MCF 10A (cell line): ENCODE measurements at regions of chr4 and their contacts with region 1.

Region 1: DNA sequence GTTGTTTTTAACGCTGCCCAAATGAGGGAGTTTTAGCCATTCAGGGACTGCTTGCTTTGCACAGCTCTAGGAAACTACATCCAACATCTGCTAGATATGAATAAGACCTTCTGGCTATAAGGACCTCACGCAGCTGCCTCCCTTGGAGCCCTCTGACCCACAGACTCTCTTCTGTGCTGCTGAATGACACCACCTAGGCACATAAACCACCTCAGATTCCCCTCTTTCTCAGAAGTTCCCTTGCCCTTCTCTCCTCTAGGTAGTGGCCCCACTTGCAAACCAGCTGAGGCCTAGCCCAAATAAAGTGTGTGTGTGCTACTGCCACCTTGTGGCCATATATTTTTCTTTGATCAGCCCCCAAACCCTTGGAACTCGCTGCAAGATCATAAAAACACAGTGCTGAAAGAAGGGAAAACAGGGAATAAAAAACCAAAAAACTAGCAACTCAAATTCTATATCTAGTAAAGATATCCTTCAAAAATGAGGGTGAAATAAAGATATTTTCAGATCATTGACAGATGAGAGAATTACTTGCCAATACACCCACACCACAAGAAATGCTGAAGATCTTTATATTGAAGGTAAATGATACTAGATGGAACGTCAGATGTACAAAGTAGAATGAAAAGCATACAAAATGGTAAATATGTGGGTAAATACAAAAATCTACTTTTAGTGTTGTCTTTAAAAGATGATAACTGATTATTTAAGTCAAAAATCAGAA is 265.9 kb downstream of the ADAMTS3 start:
- DNase-seq: peak; percentile 66
- H3K4me3 Mint-ChIP-seq: no peak overlapping the region
- H3K27ac Mint-ChIP-seq: no peak overlapping the region
- H3K4me1 Mint-ChIP-seq: no peaks in the 10 kb centered on the region
- H3K27me3 Mint-ChIP-seq: no peaks in the 10 kb centered on the region
- CTCF ChIP-seq: peak; percentile 58

Region 2: DNA sequence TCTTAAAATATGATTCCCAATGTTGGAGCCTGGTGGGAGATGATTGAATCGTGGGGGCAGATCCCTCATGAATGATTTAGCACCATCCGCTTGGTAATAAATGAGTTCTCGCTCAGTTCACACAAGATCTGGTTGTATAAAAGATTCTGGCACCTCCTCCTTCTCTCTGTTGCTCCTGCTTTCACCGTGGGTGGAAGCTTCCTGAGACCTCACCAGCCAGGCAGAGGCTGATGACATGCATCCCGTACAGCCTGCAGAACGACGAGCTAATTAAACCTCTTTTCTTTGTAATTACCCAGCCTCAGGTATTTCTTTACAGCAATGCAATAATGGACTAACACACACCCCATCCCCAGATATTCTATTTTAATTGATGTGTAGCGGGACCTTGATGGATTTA is 109.1 kb before region 1 on chr4:
- CTCF ChIA-PET with region 1: no interaction called
- POLR2A ChIA-PET with region 1: no interaction called
- intact Hi-C with region 1: no loop called
- DNase-seq: no peak
- H3K4me3 Mint-ChIP-seq: no peak overlapping the region
- H3K27ac Mint-ChIP-seq: no peak overlapping the region
- H3K4me1 Mint-ChIP-seq: no peaks in the 10 kb centered on the region
- H3K27me3 Mint-ChIP-seq: no peaks in the 10 kb centered on the region
- CTCF ChIP-seq: no peak

Region 3: DNA sequence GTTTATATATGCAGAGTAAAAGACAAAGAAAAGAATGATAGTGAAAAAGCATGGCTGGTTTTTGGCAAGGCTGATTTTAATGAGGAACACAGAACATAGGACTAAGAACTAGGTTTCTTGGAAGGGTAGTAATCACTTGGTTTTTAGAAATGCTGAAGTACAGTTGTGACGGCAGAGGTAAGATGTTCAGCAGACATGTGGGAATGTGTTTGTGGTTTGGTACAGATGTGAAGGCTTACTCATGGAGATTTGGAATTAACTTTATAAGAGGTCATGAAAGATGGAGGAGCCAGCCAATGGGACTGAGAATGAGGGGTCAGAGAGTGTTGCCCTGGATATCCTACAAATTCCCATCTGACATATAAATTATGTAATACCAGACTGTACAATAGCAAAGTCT is 27.8 kb before region 1 on chr4:
- CTCF ChIA-PET with region 1: no interaction called
- POLR2A ChIA-PET with region 1: no interaction called
- intact Hi-C with region 1: no loop called
- DNase-seq: no peak
- H3K4me3 Mint-ChIP-seq: no peak overlapping the region
- H3K27ac Mint-ChIP-seq: no peak overlapping the region
- H3K4me1 Mint-ChIP-seq: no peaks in the 10 kb centered on the region
- H3K27me3 Mint-ChIP-seq: no peaks in the 10 kb centered on the region
- CTCF ChIP-seq: no peak

Region 4: GRCh38 chr4:72319596-72319995 is 16.5 kb after region 1 on chr4:
- CTCF ChIA-PET with region 1: interaction called, 13 read pairs
- POLR2A ChIA-PET with region 1: interaction called, 10 read pairs
- intact Hi-C with region 1: no loop called
- DNase-seq: peak; percentile 49
- H3K4me3 Mint-ChIP-seq: no peak overlapping the region
- H3K27ac Mint-ChIP-seq: no peak overlapping the region
- H3K4me1 Mint-ChIP-seq: peaks cover 25% of the 10 kb centered on the region
- H3K27me3 Mint-ChIP-seq: no peaks in the 10 kb centered on the region
- CTCF ChIP-seq: no peak

Region 5: DNA sequence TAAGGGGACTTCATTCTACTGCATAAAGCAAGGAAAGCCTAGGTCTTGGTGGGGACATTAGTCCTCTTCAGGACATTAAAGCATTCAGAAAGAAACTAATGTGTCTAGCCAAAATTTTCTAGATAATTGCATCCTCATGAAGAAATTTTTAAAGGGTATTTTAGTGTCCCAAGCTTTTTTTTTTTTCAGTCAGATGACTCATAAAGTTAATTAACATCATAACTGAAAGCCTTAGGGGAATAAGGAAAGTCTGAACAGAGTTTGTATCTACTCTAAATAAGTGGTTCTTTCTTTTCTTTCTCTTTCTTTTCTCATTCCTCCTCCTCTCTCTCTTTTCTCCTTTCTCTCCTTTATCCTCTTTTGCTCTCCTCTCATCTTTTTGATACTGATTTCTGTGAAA is 63.5 kb after region 1 on chr4:
- CTCF ChIA-PET with region 1: no interaction called
- POLR2A ChIA-PET with region 1: no interaction called
- intact Hi-C with region 1: no loop called
- DNase-seq: no peak
- H3K4me3 Mint-ChIP-seq: no peak overlapping the region
- H3K27ac Mint-ChIP-seq: peak overlapping the region; percentile 79
- H3K4me1 Mint-ChIP-seq: peaks cover 6% of the 10 kb centered on the region
- H3K27me3 Mint-ChIP-seq: no peaks in the 10 kb centered on the region
- CTCF ChIP-seq: no peak

Region 6: GRCh38 chr4:72468904-72469502 is 165.9 kb after region 1 on chr4:
- CTCF ChIA-PET with region 1: interaction called, 32 read pairs
- POLR2A ChIA-PET with region 1: interaction called, 3 read pairs
- intact Hi-C with region 1: no loop called
- DNase-seq: peak; percentile 54
- H3K4me3 Mint-ChIP-seq: no peak overlapping the region
- H3K27ac Mint-ChIP-seq: no peak overlapping the region
- H3K4me1 Mint-ChIP-seq: peaks cover 7% of the 10 kb centered on the region
- H3K27me3 Mint-ChIP-seq: no peaks in the 10 kb centered on the region
- CTCF ChIP-seq: peak; percentile 55

Region 7: GRCh38 chr4:72496112-72496511 is 193.0 kb after region 1 on chr4:
- CTCF ChIA-PET with region 1: interaction called, 34 read pairs
- POLR2A ChIA-PET with region 1: no interaction called
- intact Hi-C with region 1: no loop called
- DNase-seq: peak; percentile 20
- H3K4me3 Mint-ChIP-seq: no peak overlapping the region
- H3K27ac Mint-ChIP-seq: no peak overlapping the region
- H3K4me1 Mint-ChIP-seq: no peaks in the 10 kb centered on the region
- H3K27me3 Mint-ChIP-seq: no peaks in the 10 kb centered on the region
- CTCF ChIP-seq: peak; percentile 25

Region 8: GRCh38 chr4:72567821-72568675 is 264.9 kb after region 1 on chr4:
- CTCF ChIA-PET with region 1: no interaction called
- POLR2A ChIA-PET with region 1: no interaction called
- intact Hi-C with region 1: loop called (anchors 10 kb)
- DNase-seq: peak; percentile 89
- H3K4me3 Mint-ChIP-seq: peak overlapping the region; percentile 76
- H3K27ac Mint-ChIP-seq: peak overlapping the region; percentile 23
- H3K4me1 Mint-ChIP-seq: peaks cover 24% of the 10 kb centered on the region
- H3K27me3 Mint-ChIP-seq: no peaks in the 10 kb centered on the region
- CTCF ChIP-seq: peak; percentile 40